ENCODE measurements at regions of chr3 and their contacts with region 1.

Region 1: GRCh38 chr3:115147329-115148141 is 447 bp upstream of the ZBTB20 start:
- DNase-seq: peak; percentile 92 to 100
- ATAC-seq: peak; percentile 71 to 87 (median 75)
- H3K4me3 ChIP-seq: peak overlapping the region; percentile 90
- H3K4me3 Mint-ChIP-seq: peak overlapping the region; percentile 93
- H3K27ac ChIP-seq: peak overlapping the region; percentile 96
- H3K27ac Mint-ChIP-seq: peak overlapping the region; percentile 90 to 99
- H3K4me1 ChIP-seq: peaks cover 10% of the 10 kb centered on the region
- H3K4me1 Mint-ChIP-seq: peaks cover 18 to 19% of the 10 kb centered on the region in 2 donors
- H3K27me3 ChIP-seq: no peaks in the 10 kb centered on the region
- H3K27me3 Mint-ChIP-seq: no peaks in the 10 kb centered on the region
- CTCF ChIP-seq: no peak

Region 2: DNA sequence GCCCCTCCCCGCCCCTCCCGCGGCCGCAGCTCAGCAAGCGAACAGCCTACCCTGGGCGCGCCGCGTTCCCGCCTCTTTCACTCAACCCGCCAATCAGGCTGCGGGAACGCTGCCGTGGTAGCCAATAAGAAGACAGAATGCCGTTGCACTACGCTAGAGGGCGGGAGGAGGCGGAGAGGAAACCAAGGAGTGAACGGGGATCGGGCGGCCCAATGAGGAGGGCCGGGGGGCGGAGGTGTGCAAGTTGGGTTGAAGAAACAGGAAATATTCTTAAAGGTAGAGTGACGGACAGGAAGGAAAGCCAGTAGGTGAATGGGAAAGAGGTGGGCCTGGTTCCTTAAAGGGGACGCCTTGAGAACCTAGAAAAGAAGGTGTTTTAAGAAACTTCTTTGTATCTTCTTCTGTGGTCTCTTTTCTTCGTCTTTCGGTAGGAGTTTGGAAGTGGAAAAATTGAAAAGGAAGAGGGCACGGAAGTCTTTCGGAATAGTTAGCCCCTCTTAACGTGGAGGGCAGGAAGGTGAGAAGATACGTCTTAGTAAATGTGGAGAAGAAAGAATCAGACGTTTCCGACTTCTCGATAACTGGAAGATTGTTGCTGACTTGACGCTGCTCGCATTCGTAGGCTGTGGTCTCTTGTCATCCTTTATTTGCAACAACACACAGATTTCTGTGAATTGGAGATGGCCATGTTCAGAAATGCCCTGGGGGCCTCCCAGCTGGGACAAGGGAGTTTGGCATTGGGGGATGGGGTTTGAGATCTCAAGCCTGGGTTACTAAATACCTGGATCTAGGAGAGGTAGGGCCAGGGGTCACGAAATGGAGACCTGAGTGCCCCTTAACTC is 1450.7 kb before region 1 on chr3:
- intact Hi-C with region 1: loop called (anchors 5 kb)
- DNase-seq: peak; percentile 99
- ATAC-seq: peak; percentile 86 to 95 (median 87)
- H3K4me3 ChIP-seq: peak overlapping the region; percentile 83
- H3K4me3 Mint-ChIP-seq: no peak overlapping the region
- H3K27ac ChIP-seq: peak overlapping the region; percentile 90
- H3K27ac Mint-ChIP-seq: no peak overlapping the region
- H3K4me1 ChIP-seq: peaks cover 9% of the 10 kb centered on the region
- H3K4me1 Mint-ChIP-seq: peaks cover 20 to 21% of the 10 kb centered on the region in 2 donors
- H3K27me3 ChIP-seq: no peaks in the 10 kb centered on the region
- H3K27me3 Mint-ChIP-seq: no peaks in the 10 kb centered on the region
- CTCF ChIP-seq: no peak

Region 3: GRCh38 chr3:114213627-114214541 is 933.7 kb before region 1 on chr3:
- intact Hi-C with region 1: loop called (anchors 2 kb)
- DNase-seq: peak; percentile 73 to 88
- ATAC-seq: peak; percentile 61 to 77 (median 63)
- H3K4me3 ChIP-seq: peak overlapping the region; percentile 46
- H3K4me3 Mint-ChIP-seq: no peak overlapping the region
- H3K27ac ChIP-seq: peak overlapping the region; percentile 97
- H3K27ac Mint-ChIP-seq: no peak overlapping the region
- H3K4me1 ChIP-seq: peaks cover 63% of the 10 kb centered on the region
- H3K4me1 Mint-ChIP-seq: no peaks in the 10 kb centered on the region
- H3K27me3 ChIP-seq: no peaks in the 10 kb centered on the region
- H3K27me3 Mint-ChIP-seq: no peaks in the 10 kb centered on the region
- CTCF ChIP-seq: peak; percentile 12

Region 4: DNA sequence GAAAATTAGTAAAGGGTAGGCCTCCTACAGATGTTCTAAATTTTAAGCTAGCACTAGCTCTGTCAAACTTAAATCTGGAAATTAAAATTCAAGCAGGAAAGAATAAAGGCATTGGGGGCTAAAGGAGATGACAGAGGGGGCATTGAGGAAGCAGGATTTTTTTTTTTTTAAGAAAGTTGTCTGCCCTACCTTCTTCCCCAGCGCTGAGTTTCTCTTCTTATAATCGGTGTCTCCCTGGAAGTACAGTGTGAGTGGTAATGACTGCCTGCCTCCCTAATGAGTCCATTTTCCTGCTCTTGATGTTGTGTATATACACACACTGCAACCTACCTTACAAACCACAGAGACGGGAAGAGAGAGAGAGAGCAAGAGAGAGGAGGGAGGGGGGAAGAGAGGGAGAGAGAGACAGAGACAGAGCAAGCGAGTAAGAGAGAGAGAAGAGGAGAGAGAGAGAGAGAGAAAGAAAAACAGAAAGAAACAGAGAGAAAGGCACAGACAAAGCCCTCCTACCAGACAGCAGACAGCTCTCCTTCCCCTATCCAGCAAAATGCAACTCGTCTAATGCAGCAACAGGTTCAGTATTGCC is 47.5 kb before region 1 on chr3:
- intact Hi-C with region 1: loop called (anchors 2 kb)
- DNase-seq: peak in 1 of 2 donors; percentile 74
- ATAC-seq: peak; percentile 59 to 67 (median 65)
- H3K4me3 ChIP-seq: peak overlapping the region; percentile 15
- H3K4me3 Mint-ChIP-seq: peak overlapping the region; percentile 76
- H3K27ac ChIP-seq: peak overlapping the region; percentile 43
- H3K27ac Mint-ChIP-seq: peak overlapping the region; percentile 62 to 86
- H3K4me1 ChIP-seq: peaks cover 2% of the 10 kb centered on the region
- H3K4me1 Mint-ChIP-seq: peaks cover 17 to 31% of the 10 kb centered on the region in 2 donors
- H3K27me3 ChIP-seq: no peaks in the 10 kb centered on the region
- H3K27me3 Mint-ChIP-seq: no peaks in the 10 kb centered on the region
- CTCF ChIP-seq: no peak

Region 5: DNA sequence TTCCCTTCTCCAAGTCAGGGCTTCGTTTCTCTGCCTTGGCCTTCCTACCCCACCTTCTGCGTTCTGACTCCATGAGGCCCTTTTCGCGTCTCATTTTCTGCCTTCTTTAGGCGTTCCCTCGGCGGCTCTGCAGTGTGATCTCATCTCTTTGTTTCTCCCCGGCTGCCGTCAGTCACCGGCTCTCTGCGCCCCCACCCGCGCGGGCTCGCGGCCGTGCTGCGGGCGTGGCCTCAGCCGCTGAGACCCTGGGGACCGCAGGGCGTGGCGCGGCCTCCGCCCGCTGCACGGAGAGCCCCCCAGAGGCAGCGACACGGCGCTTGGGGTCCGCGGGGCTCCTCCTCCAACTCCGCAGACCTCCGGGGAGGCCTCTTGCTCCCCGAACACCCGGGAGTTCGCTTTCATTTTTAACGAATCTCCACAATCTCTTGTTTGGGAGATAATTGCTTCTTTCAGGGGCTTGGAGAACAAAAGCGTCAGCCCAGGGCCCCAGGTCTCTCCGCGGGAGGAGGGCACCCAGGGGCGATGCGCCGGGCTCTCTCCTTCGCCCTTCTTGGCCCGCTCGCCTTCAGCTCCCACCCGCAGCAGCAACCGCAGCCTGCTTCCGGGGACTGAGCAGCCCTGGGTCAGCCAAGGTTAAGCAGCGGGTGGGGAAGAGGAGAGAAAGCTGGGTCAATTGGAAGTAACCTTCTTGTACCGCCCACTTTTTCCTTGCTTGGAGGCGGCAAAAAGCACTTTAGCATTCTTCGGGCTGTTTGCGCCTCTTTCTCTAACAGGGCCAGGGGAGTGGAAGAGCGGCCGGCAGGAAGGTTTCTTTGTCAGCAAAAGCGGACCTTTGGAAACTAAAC is 511.0 kb after region 1 on chr3:
- intact Hi-C with region 1: loop called (anchors 2 kb)
- DNase-seq: peak; percentile 65 to 80
- ATAC-seq: peak; percentile 85 to 88 (median 86)
- H3K4me3 ChIP-seq: peak overlapping the region; percentile 71
- H3K4me3 Mint-ChIP-seq: peak overlapping the region; percentile 91
- H3K27ac ChIP-seq: peak overlapping the region; percentile 89
- H3K27ac Mint-ChIP-seq: peak overlapping the region; percentile 85 to 94
- H3K4me1 ChIP-seq: peaks cover 14% of the 10 kb centered on the region
- H3K4me1 Mint-ChIP-seq: peaks cover 21 to 22% of the 10 kb centered on the region in 2 donors
- H3K27me3 ChIP-seq: peaks cover 1% of the 10 kb centered on the region
- H3K27me3 Mint-ChIP-seq: peaks cover 0 to 18% of the 10 kb centered on the region in 2 donors
- CTCF ChIP-seq: no peak

Measured in natural killer cell (primary cell).